B cell (primary cell): ENCODE measurements at regions of chr11 and their contacts with region 1.

Region 1: GRCh38 chr11:114148013-114148382 is 88.5 kb downstream of the ZBTB16 start:
- DNase-seq: no peak
- ATAC-seq: no peak
- H3K4me3 ChIP-seq: no peak overlapping the region
- H3K4me3 Mint-ChIP-seq: no peak overlapping the region
- H3K27ac ChIP-seq: no peak overlapping the region
- H3K27ac Mint-ChIP-seq: no peak overlapping the region
- H3K4me1 ChIP-seq: peaks cover 21 to 38% of the 10 kb centered on the region in 2 donors
- H3K4me1 Mint-ChIP-seq: peaks cover 31% of the 10 kb centered on the region
- H3K27me3 ChIP-seq: no peaks in the 10 kb centered on the region
- H3K27me3 Mint-ChIP-seq: peaks cover 9% of the 10 kb centered on the region
- CTCF ChIP-seq: no peak

Region 2: GRCh38 chr11:114099392-114100178 is 48.4 kb before region 1 on chr11:
- CTCF ChIA-PET with region 1: no interaction called
- POLR2A ChIA-PET with region 1: no interaction called
- intact Hi-C with region 1: loop called (anchors 5 kb)
- DNase-seq: no peak
- ATAC-seq: no peak
- H3K4me3 ChIP-seq: no peak overlapping the region
- H3K4me3 Mint-ChIP-seq: no peak overlapping the region
- H3K27ac ChIP-seq: no peak overlapping the region
- H3K27ac Mint-ChIP-seq: no peak overlapping the region
- H3K4me1 ChIP-seq: peaks cover 23 to 24% of the 10 kb centered on the region in 2 donors
- H3K4me1 Mint-ChIP-seq: peaks cover 28% of the 10 kb centered on the region
- H3K27me3 ChIP-seq: no peaks in the 10 kb centered on the region
- H3K27me3 Mint-ChIP-seq: peaks cover 6% of the 10 kb centered on the region
- CTCF ChIP-seq: no peak

Region 3: GRCh38 chr11:114129699-114130098 is 18.3 kb before region 1 on chr11:
- CTCF ChIA-PET with region 1: no interaction called
- POLR2A ChIA-PET with region 1: no interaction called
- intact Hi-C with region 1: no loop called
- DNase-seq: no peak
- ATAC-seq: no peak
- H3K4me3 ChIP-seq: no peak overlapping the region
- H3K4me3 Mint-ChIP-seq: no peak overlapping the region
- H3K27ac ChIP-seq: no peak overlapping the region
- H3K27ac Mint-ChIP-seq: no peak overlapping the region
- H3K4me1 ChIP-seq: no peaks in the 10 kb centered on the region
- H3K4me1 Mint-ChIP-seq: peaks cover 4% of the 10 kb centered on the region
- H3K27me3 ChIP-seq: no peaks in the 10 kb centered on the region
- H3K27me3 Mint-ChIP-seq: peaks cover 19% of the 10 kb centered on the region
- CTCF ChIP-seq: no peak